AG04449 (cell line): ENCODE measurements at regions of chr1 and their contacts with region 1.

Region 1: GRCh38 chr1:178031856-178032320 is 62.0 kb upstream of the RASAL2 start:
- DNase-seq: peak; percentile 74
- H3K4me3 ChIP-seq: no peak overlapping the region
- CTCF ChIP-seq: peak; percentile 83

Region 2: DNA sequence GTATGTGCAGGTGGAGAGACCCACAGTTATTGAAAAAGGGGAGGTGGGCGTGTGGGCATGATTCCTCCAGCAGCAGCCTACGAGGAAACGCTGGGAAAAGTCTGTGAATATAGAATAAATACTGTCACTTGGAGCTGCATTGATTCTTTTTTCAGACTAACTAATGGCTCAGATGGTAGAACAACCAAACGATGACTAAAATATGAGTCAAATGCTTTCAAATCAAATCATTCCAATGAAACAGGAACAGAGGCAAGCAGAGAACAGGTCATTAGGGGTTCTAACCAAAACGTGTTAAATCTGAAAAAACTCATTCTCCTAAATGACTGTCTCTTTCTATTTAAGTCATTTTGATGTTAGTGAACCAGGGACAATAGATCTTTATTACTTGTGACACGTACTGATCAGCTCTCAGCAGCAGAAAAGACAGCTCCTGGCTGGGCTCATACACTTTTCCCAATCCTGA is 26.9 kb before region 1 on chr1:
- CTCF ChIA-PET with region 1: interaction called, 24 read pairs
- POLR2A ChIA-PET with region 1: no interaction called
- DNase-seq: no peak
- H3K4me3 ChIP-seq: no peak overlapping the region
- CTCF ChIP-seq: no peak

Region 3: DNA sequence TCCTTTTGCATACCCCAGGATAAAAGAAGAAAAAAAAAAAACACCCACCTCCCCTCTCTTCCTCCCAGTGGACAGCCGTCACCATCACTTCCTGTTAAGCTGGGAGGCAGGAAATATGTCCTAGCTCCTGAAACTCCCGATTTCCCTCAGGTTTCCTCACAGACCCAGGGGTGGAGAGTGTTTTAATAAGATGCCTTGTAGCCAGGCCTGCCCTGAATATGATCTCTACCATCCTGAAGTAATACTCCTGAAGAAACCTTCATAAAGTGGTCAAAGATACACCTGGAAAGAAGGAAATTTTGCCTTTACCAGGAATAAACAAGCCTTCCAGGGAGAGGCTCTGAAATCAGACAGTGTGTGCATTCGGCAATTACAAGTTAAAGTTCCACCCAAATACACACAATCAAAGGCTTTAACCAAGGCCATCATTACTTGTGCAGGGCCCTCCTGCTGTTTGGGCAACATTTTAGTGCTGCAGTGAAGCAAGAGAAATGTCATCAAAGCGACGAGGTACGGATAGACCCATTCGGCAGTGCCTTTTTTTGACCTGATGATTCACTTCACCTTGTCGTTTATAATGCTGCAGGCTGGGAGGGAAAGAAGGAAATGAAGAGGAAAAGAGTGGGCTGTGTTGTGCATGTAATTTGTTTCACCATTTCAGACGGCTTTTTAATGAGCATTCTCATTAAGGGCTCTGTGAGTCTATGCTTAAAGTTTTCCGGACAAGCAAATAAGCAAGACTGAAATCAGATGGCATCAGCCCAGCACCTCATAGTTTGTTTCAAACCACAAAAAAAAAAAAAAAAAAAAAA is 21.0 kb after region 1 on chr1:
- CTCF ChIA-PET with region 1: interaction called, 97 read pairs
- POLR2A ChIA-PET with region 1: no interaction called
- DNase-seq: no peak
- H3K4me3 ChIP-seq: no peak overlapping the region
- CTCF ChIP-seq: no peak

Region 4: GRCh38 chr1:178119626-178120025 is 87.7 kb after region 1 on chr1:
- CTCF ChIA-PET with region 1: interaction called, 12 read pairs
- POLR2A ChIA-PET with region 1: no interaction called
- DNase-seq: no peak
- H3K4me3 ChIP-seq: no peak overlapping the region
- CTCF ChIP-seq: no peak

Region 5: GRCh38 chr1:178282949-178283367 is 251.1 kb after region 1 on chr1:
- CTCF ChIA-PET with region 1: interaction called, 154 read pairs
- POLR2A ChIA-PET with region 1: no interaction called
- DNase-seq: peak; percentile 24
- H3K4me3 ChIP-seq: no peak overlapping the region
- CTCF ChIP-seq: peak; percentile 35

Region 6: GRCh38 chr1:178397678-178398077 is 365.8 kb after region 1 on chr1:
- CTCF ChIA-PET with region 1: no interaction called
- POLR2A ChIA-PET with region 1: no interaction called
- DNase-seq: no peak
- H3K4me3 ChIP-seq: no peak overlapping the region
- CTCF ChIP-seq: no peak

Region 7: GRCh38 chr1:178501705-178502329 is 469.9 kb after region 1 on chr1:
- CTCF ChIA-PET with region 1: interaction called, 10 read pairs
- POLR2A ChIA-PET with region 1: no interaction called
- DNase-seq: no peak
- H3K4me3 ChIP-seq: no peak overlapping the region
- CTCF ChIP-seq: peak; percentile 90